ENCODE measurements at regions of chr17 and their contacts with region 1.

Region 1: DNA sequence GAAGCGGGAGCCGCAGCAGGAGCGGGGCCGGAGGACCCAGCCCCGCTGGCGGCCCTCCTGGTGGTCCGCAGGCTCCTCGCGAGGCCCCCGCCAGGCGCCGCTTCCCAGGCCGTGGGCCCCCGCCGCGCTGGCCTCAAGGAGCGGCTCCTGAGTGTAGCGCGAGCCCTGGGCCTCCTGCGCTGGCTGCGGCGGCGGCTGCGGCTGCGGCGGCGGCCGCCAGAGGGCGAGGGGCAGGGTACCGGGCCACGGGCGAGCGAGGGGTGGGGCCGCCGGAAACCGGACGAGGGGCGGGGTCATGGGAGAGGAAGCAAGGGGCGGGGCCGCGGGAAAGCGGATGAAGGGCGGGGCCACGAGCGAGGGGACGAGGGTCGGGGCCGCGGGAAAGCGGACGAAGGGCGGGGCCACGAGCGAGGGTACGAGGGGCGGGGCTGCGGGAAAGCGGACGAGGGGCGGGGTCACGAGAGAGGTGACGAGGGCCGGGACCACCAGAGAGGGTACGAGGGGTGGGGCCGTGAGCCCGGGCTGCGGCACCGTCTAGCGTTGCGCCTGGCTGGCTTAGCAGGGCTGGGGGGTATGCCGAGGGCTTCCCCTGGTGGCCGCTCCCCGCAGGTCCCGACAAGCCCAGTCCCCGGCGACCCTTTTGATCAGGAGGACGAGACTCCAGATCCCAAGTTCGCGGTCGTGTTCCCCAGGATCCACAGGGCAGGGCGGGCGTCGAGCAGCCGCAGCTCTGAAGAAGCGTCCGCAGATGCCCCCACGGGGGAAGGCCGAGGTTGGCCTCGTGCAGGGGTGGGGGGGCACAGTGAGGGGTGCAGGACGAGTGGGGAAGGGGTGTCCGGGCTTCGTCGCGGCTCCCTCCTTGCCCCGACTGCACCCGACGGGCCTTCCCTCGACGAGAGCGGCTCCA is 1.7 kb downstream of the MYO15B start:
- DNase-seq: peak; percentile 98
- H3K4me3 Mint-ChIP-seq: peak overlapping the region; percentile 76
- H3K27ac Mint-ChIP-seq: no peak overlapping the region
- H3K4me1 Mint-ChIP-seq: peaks cover 2% of the 10 kb centered on the region
- H3K27me3 Mint-ChIP-seq: peaks cover 2% of the 10 kb centered on the region

Region 2: GRCh38 chr17:75271233-75271954 is 317.9 kb before region 1 on chr17:
- CTCF ChIA-PET with region 1: no interaction called
- intact Hi-C with region 1: loop called (anchors 5 kb)
- DNase-seq: peak; percentile 83
- H3K4me3 Mint-ChIP-seq: peak overlapping the region; percentile 76
- H3K27ac Mint-ChIP-seq: peak overlapping the region; percentile 70
- H3K4me1 Mint-ChIP-seq: peaks cover 35% of the 10 kb centered on the region
- H3K27me3 Mint-ChIP-seq: no peaks in the 10 kb centered on the region

Region 3: GRCh38 chr17:75430159-75430974 is 158.9 kb before region 1 on chr17:
- CTCF ChIA-PET with region 1: no interaction called
- intact Hi-C with region 1: loop called (anchors 2 kb)
- DNase-seq: no peak
- H3K4me3 Mint-ChIP-seq: no peak overlapping the region
- H3K27ac Mint-ChIP-seq: no peak overlapping the region
- H3K4me1 Mint-ChIP-seq: peaks cover 8% of the 10 kb centered on the region
- H3K27me3 Mint-ChIP-seq: peaks cover 2% of the 10 kb centered on the region

Region 4: DNA sequence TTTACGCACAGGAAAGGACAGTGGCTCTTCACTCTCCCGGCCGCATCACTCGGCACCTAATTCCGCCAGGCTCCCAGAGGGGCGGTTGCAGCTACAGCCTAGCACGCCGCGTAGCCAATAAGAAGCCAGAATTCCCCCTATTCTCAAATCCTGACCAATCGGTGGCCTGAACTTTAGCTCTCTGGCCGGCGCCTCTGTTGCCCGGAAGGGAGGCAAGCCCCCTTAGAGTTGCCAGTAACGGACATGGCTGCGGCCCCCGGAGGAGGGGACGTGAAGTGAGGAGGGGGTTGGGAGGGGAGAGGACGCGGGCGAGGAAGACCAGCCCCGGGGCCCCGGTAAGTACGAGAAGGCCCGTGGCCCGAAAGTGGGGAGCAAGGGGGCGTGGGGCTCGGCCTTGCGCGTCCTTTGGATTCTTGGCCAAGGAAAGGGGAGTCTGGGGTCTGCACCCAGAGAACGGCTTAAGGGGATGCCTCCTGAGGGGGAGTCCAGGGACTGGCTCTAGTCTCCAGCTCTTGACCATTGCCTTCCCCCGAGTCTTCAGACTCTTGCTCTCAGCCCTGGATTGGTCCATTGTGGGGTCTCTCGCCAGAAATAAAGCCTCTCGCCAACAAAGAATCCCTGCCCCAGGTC is 132.7 kb before region 1 on chr17 and contains the start of gene TMEM94:
- CTCF ChIA-PET with region 1: no interaction called
- intact Hi-C with region 1: loop called (anchors 10 kb)
- DNase-seq: peak; percentile 96
- H3K4me3 Mint-ChIP-seq: peak within 1 kb of the TSS; percentile 83
- H3K27ac Mint-ChIP-seq: peak within 1 kb of the TSS; percentile 85
- H3K4me1 Mint-ChIP-seq: peaks cover 15% of the 10 kb centered on the region
- H3K27me3 Mint-ChIP-seq: no peaks in the 10 kb centered on the region
- total RNA-seq, gene TMEM94: 50.4 to 53.5 TPM

Region 5: GRCh38 chr17:75515496-75516254 is 73.6 kb before region 1 on chr17 and contains the start of gene CASKIN2:
- CTCF ChIA-PET with region 1: no interaction called
- intact Hi-C with region 1: loop called (anchors 2 kb)
- DNase-seq: peak; percentile 90
- H3K4me3 Mint-ChIP-seq: peak within 1 kb of the TSS; percentile 62
- H3K27ac Mint-ChIP-seq: no peak within 1 kb of the TSS
- H3K4me1 Mint-ChIP-seq: peaks cover 23% of the 10 kb centered on the region
- H3K27me3 Mint-ChIP-seq: no peaks in the 10 kb centered on the region
- total RNA-seq, gene CASKIN2: 1.0 to 1.1 TPM

Region 6: DNA sequence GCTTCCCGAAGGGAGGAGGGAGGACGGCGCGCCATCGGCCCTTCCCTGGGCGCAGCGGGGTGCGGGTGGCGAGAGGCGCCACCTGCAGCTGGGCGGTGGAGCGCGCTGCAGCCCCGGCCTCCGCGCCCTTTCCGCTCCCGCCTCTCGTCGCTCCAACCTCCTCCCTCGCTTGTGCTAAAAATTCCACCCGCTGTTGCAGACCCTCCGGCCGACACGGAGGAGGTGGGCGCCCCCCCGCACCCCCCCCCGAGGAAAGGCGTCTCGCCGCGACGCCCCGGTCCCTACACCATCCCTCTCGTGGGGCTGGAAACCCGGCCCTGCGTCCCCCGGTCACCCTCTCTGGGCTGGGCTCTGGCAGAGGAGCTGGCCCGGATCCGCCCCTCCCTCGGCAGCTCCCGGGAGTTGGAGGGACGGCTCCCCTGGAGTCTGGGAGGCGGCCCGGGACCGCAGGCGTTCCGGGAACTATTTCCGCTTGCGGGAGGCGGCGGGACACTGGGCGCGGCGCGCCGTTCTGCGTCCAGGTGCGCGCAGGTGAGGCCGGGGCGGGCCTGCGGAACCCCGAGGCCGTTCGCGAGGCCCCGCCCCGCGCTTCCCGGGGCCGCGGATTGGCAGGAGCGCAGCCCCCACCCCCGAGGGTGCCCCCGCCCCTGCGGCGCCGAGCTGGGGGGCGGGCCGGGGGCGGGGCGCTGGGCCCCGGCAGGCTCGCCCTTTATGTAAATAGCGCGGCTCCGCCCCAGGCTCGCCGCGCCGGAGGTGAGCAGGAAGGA is 64.1 kb before region 1 on chr17 and contains the start of gene LLGL2:
- CTCF ChIA-PET with region 1: no interaction called
- intact Hi-C with region 1: loop called (anchors 2 kb)
- DNase-seq: peak; percentile 74
- H3K4me3 Mint-ChIP-seq: peak within 1 kb of the TSS; percentile 58
- H3K27ac Mint-ChIP-seq: no peak within 1 kb of the TSS
- H3K4me1 Mint-ChIP-seq: peaks cover 9% of the 10 kb centered on the region
- H3K27me3 Mint-ChIP-seq: no peaks in the 10 kb centered on the region
- total RNA-seq, gene LLGL2: 6.2 to 6.8 TPM

Region 7: DNA sequence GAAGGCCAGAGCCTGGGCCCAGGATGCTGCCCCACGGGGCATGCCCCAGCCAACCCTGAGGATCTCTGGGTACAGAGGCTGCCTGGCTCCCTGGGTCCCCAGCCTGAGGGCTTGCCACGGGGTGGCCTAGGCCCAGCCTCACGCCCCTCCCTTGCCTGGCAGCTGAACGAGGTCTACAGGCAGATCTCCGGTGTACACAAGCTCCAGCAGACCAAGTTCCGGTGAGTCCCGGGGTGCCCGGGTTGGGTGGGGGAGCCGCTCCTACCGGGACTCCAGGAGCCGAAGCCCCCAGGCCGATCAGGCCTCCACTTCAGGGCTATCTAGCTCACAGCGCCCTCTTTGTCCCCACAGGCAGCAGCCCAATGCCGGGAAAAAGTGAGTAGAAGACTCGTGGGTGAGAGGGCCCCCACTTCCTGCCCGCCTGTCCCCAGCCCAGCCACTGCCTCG is 151.4 kb after region 1 on chr17:
- CTCF ChIA-PET with region 1: no interaction called
- intact Hi-C with region 1: no loop called
- DNase-seq: no peak
- H3K4me3 Mint-ChIP-seq: no peak overlapping the region
- H3K27ac Mint-ChIP-seq: no peak overlapping the region
- H3K4me1 Mint-ChIP-seq: peaks cover 3% of the 10 kb centered on the region
- H3K27me3 Mint-ChIP-seq: no peaks in the 10 kb centered on the region